Uterus (tissue), 4 donors: ENCODE measurements at regions of chr15 and their contacts with region 1.

Region 1: DNA sequence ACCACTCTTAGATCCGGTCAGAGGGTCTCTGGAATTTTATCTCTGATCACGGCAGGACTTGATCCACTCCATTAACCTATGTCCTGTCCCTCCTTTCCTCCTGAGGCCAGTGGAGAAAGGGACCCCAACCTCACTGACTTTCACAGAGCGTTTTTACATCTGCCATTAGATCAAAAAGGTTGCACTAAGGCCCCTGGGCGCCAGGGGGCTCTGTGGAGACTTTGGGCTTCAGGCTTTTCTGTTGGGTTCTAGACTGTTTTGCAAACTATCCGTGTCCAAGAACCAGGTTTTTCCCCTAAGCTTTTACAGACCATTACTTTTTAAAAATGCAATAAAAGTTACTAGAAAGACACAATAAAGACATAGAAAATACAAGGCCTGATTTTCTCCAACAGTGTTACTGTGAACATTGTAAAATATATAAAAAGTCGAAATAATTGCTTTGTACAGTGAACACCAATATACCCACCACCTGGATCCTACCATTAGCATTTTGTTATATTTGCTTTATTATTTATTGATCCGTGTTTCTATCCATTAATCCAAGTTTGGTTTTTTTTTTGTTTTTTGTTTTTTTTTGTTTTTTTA is 159.7 kb downstream of the POLR2M start:
- DNase-seq: peak; percentile 37
- H3K4me3 ChIP-seq: no peak overlapping the region
- H3K27ac ChIP-seq: no peak overlapping the region
- H3K4me1 ChIP-seq: no peaks in the 10 kb centered on the region
- H3K27me3 ChIP-seq: no peaks in the 10 kb centered on the region
- CTCF ChIP-seq: peak; percentile 47 to 54 (median 48)
- POLR2A ChIP-seq: no peak

Region 2: DNA sequence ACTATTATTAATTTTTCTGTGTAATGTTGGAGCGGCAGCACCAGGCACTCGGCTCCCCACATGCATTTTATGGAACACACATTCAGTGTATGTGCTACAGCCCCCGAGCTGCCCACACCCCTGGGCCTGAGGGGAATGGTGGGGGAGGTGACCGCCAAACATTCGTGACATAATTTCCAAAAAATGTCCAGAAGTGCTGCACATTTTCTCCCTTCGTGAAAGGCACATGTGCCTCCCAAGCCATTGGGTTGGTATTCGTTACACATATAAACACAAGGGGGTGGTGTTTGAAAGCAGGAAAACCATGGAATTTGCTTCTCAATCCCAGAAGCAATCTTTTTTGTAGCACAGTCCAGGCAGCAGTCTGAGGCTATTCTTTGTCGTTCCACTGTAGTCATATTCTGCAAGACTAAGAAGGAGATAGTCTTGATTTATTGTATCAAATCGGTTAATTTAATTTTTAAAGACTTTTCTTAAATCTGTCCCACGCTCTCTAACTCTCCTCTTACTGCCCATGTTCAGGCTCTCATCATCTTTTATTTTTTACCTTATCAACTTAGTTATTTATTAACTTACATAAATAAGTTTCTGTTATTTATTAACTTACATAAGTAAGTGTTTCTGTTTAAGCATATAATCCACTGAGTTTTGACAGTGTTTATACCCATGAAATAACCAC is 198.9 kb before region 1 on chr15:
- intact Hi-C with region 1: loop called (anchors 10 kb)
- DNase-seq: peak; percentile 30 to 53
- H3K4me3 ChIP-seq: no peak overlapping the region
- H3K27ac ChIP-seq: peak overlapping the region; percentile 48 to 53
- H3K4me1 ChIP-seq: no peaks in the 10 kb centered on the region
- H3K27me3 ChIP-seq: no peaks in the 10 kb centered on the region
- CTCF ChIP-seq: peak; percentile 60 to 80 (median 73)
- POLR2A ChIP-seq: no peak